H1 (cell line): ENCODE measurements at regions of chr9 and their contacts with region 1.

Region 1: DNA sequence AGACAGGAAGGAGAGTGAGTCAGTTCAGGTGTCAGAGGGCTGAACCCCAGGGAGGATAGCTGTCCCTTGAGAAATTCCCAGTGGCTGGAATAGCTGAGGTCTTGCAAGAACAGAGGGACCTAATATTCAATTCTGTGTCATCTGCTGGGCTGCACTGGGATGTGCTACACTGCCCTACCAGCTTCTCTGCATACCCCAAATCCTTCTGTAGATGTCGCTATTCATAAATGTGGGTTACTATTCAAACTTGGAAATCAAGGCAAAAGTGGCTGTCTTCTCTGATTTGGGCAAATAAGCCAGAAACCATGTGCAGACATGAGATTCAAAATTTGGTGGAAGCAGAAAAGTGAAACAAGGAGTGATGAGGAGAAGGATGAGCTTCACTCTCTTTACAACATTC is 16.3 kb downstream of the TNFSF8 start:
- DNase-seq: no peak
- H3K4me3 ChIP-seq: no peak overlapping the region
- H3K27ac ChIP-seq: no peak overlapping the region
- H3K4me1 ChIP-seq: no peaks in the 10 kb centered on the region
- H3K27me3 ChIP-seq: peaks cover 2 to 34% (median 19%) of the 10 kb centered on the region in 4 experiments
- CTCF ChIP-seq: peak in 2 of 3 experiments; percentile 44 to 55; a peak in 3 of 4 replicates
- EP300 ChIP-seq: no peak
- POLR2A ChIP-seq: no peak
- RAD21 ChIP-seq: peak; percentile 23 to 41; a peak in 3 of 4 replicates

Region 2: GRCh38 chr9:114738581-114739316 is 175.4 kb before region 1 on chr9:
- CTCF ChIA-PET with region 1: interaction called, 269 read pairs
- POLR2A ChIA-PET with region 1: no interaction called
- DNase-seq: peak; percentile 46 to 78
- H3K4me3 ChIP-seq: no peak overlapping the region
- H3K27ac ChIP-seq: no peak overlapping the region
- H3K4me1 ChIP-seq: no peaks in the 10 kb centered on the region
- H3K27me3 ChIP-seq: no peaks in the 10 kb centered on the region
- CTCF ChIP-seq: peak; percentile 62 to 92 (median 87)
- EP300 ChIP-seq: no peak
- POLR2A ChIP-seq: no peak
- RAD21 ChIP-seq: peak; percentile 98 to 99

Region 3: GRCh38 chr9:114745108-114745848 is 168.9 kb before region 1 on chr9:
- CTCF ChIA-PET with region 1: interaction called, 269 read pairs
- POLR2A ChIA-PET with region 1: no interaction called
- DNase-seq: no peak
- H3K4me3 ChIP-seq: no peak overlapping the region
- H3K27ac ChIP-seq: no peak overlapping the region
- H3K4me1 ChIP-seq: no peaks in the 10 kb centered on the region
- H3K27me3 ChIP-seq: no peaks in the 10 kb centered on the region
- CTCF ChIP-seq: no peak
- EP300 ChIP-seq: no peak
- POLR2A ChIP-seq: no peak
- RAD21 ChIP-seq: no peak

Region 4: GRCh38 chr9:114759512-114760341 is 154.4 kb before region 1 on chr9:
- CTCF ChIA-PET with region 1: interaction called, 17 read pairs
- POLR2A ChIA-PET with region 1: no interaction called
- DNase-seq: no peak
- H3K4me3 ChIP-seq: no peak overlapping the region
- H3K27ac ChIP-seq: no peak overlapping the region
- H3K4me1 ChIP-seq: peaks cover 0 to 4% (median 0%) of the 10 kb centered on the region in 4 experiments; a peak in 1 of 7 replicates
- H3K27me3 ChIP-seq: no peaks in the 10 kb centered on the region
- CTCF ChIP-seq: no peak
- EP300 ChIP-seq: no peak
- POLR2A ChIP-seq: no peak
- RAD21 ChIP-seq: no peak

Region 5: GRCh38 chr9:114925672-114926071 is 11.5 kb after region 1 on chr9:
- CTCF ChIA-PET with region 1: interaction called, 36 read pairs
- POLR2A ChIA-PET with region 1: no interaction called
- DNase-seq: peak in 1 of 2 experiments; percentile 49
- H3K4me3 ChIP-seq: no peak overlapping the region
- H3K27ac ChIP-seq: no peak overlapping the region
- H3K4me1 ChIP-seq: peaks cover 0 to 4% (median 0%) of the 10 kb centered on the region in 4 experiments; a peak in 2 of 7 replicates
- H3K27me3 ChIP-seq: peaks cover 68 to 94% (median 92%) of the 10 kb centered on the region in 4 experiments
- CTCF ChIP-seq: no peak
- EP300 ChIP-seq: peak in 1 of 2 experiments; percentile 35; a peak in 1 of 3 replicates
- POLR2A ChIP-seq: no peak
- RAD21 ChIP-seq: no peak